ENCODE measurements at regions of chr1 and their contacts with region 1.

Region 1: GRCh38 chr1:13725714-13726175 is 25.8 kb downstream of the PRDM2 start:
- DNase-seq: peak; percentile 35 to 83 (median 60)
- ATAC-seq: peak; percentile 51
- H3K4me3 ChIP-seq: no peak overlapping the region
- H3K4me3 Mint-ChIP-seq: no peak overlapping the region
- H3K27ac ChIP-seq: no peak overlapping the region
- H3K27ac Mint-ChIP-seq: peak overlapping the region; percentile 62
- H3K4me1 ChIP-seq: peaks cover 22% of the 10 kb centered on the region
- H3K4me1 Mint-ChIP-seq: peaks cover 69% of the 10 kb centered on the region
- H3K27me3 ChIP-seq: no peaks in the 10 kb centered on the region
- H3K27me3 Mint-ChIP-seq: no peaks in the 10 kb centered on the region
- CTCF ChIP-seq: peak; percentile 69

Region 2: GRCh38 chr1:13430495-13430894 is 295.2 kb before region 1 on chr1:
- CTCF ChIA-PET with region 1: no interaction called
- POLR2A ChIA-PET with region 1: no interaction called
- intact Hi-C with region 1: no loop called
- DNase-seq: no peak
- ATAC-seq: no peak
- H3K4me3 ChIP-seq: no peak overlapping the region
- H3K4me3 Mint-ChIP-seq: no peak overlapping the region
- H3K27ac ChIP-seq: no peak overlapping the region
- H3K27ac Mint-ChIP-seq: no peak overlapping the region
- H3K4me1 ChIP-seq: no peaks in the 10 kb centered on the region
- H3K4me1 Mint-ChIP-seq: no peaks in the 10 kb centered on the region
- H3K27me3 ChIP-seq: no peaks in the 10 kb centered on the region
- H3K27me3 Mint-ChIP-seq: peaks cover 17% of the 10 kb centered on the region
- CTCF ChIP-seq: no peak

Region 3: DNA sequence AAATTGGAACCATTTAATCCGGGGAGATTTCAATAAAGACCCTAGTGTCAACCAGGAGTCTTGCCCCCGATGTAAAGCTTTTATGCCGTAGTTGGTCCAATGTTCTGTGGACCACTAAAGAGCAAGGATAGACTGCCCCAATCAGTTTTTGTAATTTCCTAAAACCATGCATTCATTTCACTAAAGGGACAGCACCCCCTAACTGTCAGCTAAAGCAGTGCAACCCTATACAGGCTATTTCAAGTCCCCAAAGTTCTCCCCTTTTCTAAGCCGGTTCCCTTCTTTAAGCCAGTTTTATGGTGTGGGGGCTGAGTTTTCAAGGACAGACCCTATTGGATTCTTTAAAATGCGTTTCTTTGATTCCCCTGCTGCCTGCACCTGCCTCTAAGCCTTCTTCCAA is 154.8 kb before region 1 on chr1:
- CTCF ChIA-PET with region 1: no interaction called
- POLR2A ChIA-PET with region 1: no interaction called
- intact Hi-C with region 1: no loop called
- DNase-seq: peak in 1 of 14 experiments; percentile 5
- ATAC-seq: no peak
- H3K4me3 ChIP-seq: no peak overlapping the region
- H3K4me3 Mint-ChIP-seq: no peak overlapping the region
- H3K27ac ChIP-seq: no peak overlapping the region
- H3K27ac Mint-ChIP-seq: no peak overlapping the region
- H3K4me1 ChIP-seq: no peaks in the 10 kb centered on the region
- H3K4me1 Mint-ChIP-seq: no peaks in the 10 kb centered on the region
- H3K27me3 ChIP-seq: peaks cover 0 to 2% of the 10 kb centered on the region in 2 experiments
- H3K27me3 Mint-ChIP-seq: peaks cover 19% of the 10 kb centered on the region
- CTCF ChIP-seq: no peak

Region 4: GRCh38 chr1:13662493-13662892 is 63.3 kb before region 1 on chr1:
- CTCF ChIA-PET with region 1: interaction called, 21 read pairs
- POLR2A ChIA-PET with region 1: no interaction called
- intact Hi-C with region 1: loop called (anchors 1 kb)
- DNase-seq: no peak
- ATAC-seq: no peak
- H3K4me3 ChIP-seq: no peak overlapping the region
- H3K4me3 Mint-ChIP-seq: no peak overlapping the region
- H3K27ac ChIP-seq: no peak overlapping the region
- H3K27ac Mint-ChIP-seq: no peak overlapping the region
- H3K4me1 ChIP-seq: peaks cover 7% of the 10 kb centered on the region
- H3K4me1 Mint-ChIP-seq: peaks cover 6% of the 10 kb centered on the region
- H3K27me3 ChIP-seq: peaks cover 0 to 2% of the 10 kb centered on the region in 2 experiments
- H3K27me3 Mint-ChIP-seq: peaks cover 5% of the 10 kb centered on the region
- CTCF ChIP-seq: no peak

Region 5: GRCh38 chr1:13737398-13737797 is 11.7 kb after region 1 on chr1:
- CTCF ChIA-PET with region 1: interaction called, 18 read pairs
- POLR2A ChIA-PET with region 1: no interaction called
- intact Hi-C with region 1: no loop called
- DNase-seq: no peak
- ATAC-seq: no peak
- H3K4me3 ChIP-seq: no peak overlapping the region
- H3K4me3 Mint-ChIP-seq: no peak overlapping the region
- H3K27ac ChIP-seq: peak overlapping the region in 1 of 2 donors; percentile 48
- H3K27ac Mint-ChIP-seq: peak overlapping the region; percentile 80
- H3K4me1 ChIP-seq: peaks cover 11% of the 10 kb centered on the region
- H3K4me1 Mint-ChIP-seq: peaks cover 59% of the 10 kb centered on the region
- H3K27me3 ChIP-seq: no peaks in the 10 kb centered on the region
- H3K27me3 Mint-ChIP-seq: no peaks in the 10 kb centered on the region
- CTCF ChIP-seq: no peak

Region 6: GRCh38 chr1:13764588-13765332 is 39.0 kb after region 1 on chr1:
- CTCF ChIA-PET with region 1: interaction called, 5 read pairs
- POLR2A ChIA-PET with region 1: interaction called, 3 read pairs
- intact Hi-C with region 1: loop called in 1 of 2 experiments (anchors 5 kb)
- DNase-seq: peak in 4 of 14 experiments; percentile 12 to 48 (median 38)
- ATAC-seq: no peak
- H3K4me3 ChIP-seq: no peak overlapping the region
- H3K4me3 Mint-ChIP-seq: peak overlapping the region; percentile 1
- H3K27ac ChIP-seq: no peak overlapping the region
- H3K27ac Mint-ChIP-seq: no peak overlapping the region
- H3K4me1 ChIP-seq: peaks cover 56% of the 10 kb centered on the region
- H3K4me1 Mint-ChIP-seq: peaks cover 91% of the 10 kb centered on the region
- H3K27me3 ChIP-seq: no peaks in the 10 kb centered on the region
- H3K27me3 Mint-ChIP-seq: no peaks in the 10 kb centered on the region
- CTCF ChIP-seq: no peak

Region 7: GRCh38 chr1:13960375-13960987 is 234.7 kb after region 1 on chr1:
- CTCF ChIA-PET with region 1: no interaction called
- POLR2A ChIA-PET with region 1: no interaction called
- intact Hi-C with region 1: loop called in 1 of 2 experiments (anchors 2 kb)
- DNase-seq: peak; percentile 41 to 78 (median 58)
- ATAC-seq: peak; percentile 56
- H3K4me3 ChIP-seq: no peak overlapping the region
- H3K4me3 Mint-ChIP-seq: no peak overlapping the region
- H3K27ac ChIP-seq: no peak overlapping the region
- H3K27ac Mint-ChIP-seq: no peak overlapping the region
- H3K4me1 ChIP-seq: peaks cover 5% of the 10 kb centered on the region
- H3K4me1 Mint-ChIP-seq: no peaks in the 10 kb centered on the region
- H3K27me3 ChIP-seq: peaks cover 0 to 9% of the 10 kb centered on the region in 2 experiments
- H3K27me3 Mint-ChIP-seq: peaks cover 68% of the 10 kb centered on the region
- CTCF ChIP-seq: peak; percentile 96